AG04450 (cell line): ENCODE measurements at regions of chr5 and their contacts with region 1.

Region 1: DNA sequence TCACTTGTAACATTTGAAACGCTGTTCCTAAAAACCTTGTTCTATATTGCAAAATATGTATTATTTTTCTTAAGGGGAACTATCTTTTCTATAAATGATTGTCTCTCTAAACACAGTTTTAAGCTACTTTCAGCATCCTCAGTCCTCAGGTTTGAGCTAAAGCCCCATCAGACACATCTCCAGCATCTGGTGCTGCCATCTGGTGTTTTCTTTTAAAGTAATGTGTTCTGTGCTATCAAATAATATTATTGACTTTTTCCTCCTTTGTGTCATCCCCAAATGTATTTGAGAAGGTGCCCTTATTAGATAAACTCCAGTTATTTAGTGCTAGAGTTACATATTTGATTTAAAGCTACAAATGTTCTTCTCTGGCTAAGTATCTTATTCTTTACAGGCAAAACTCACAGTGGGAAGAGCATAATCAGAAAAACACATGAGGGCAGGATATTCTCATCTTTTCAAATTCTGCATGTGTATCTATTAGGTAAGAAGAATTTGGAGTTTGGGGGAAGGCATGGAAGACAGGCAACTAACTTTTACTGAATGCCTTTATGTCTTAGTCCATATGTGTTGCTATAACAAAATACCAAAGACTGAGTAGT is 27.5 kb downstream of the ZNF474 start:
- DNase-seq: no peak
- H3K4me3 ChIP-seq: no peak overlapping the region
- H3K27ac ChIP-seq: no peak overlapping the region
- H3K27me3 ChIP-seq: no peaks in the 10 kb centered on the region
- CTCF ChIP-seq: peak; percentile 57

Region 2: GRCh38 chr5:121962347-121962670 is 194.5 kb before region 1 on chr5:
- CTCF ChIA-PET with region 1: interaction called, 50 read pairs
- POLR2A ChIA-PET with region 1: no interaction called
- DNase-seq: no peak
- H3K4me3 ChIP-seq: peak overlapping the region; percentile 93
- H3K27ac ChIP-seq: peak overlapping the region; percentile 76
- H3K27me3 ChIP-seq: no peaks in the 10 kb centered on the region
- CTCF ChIP-seq: no peak

Region 3: GRCh38 chr5:122091936-122092600 is 64.8 kb before region 1 on chr5:
- CTCF ChIA-PET with region 1: interaction called, 30 read pairs
- POLR2A ChIA-PET with region 1: interaction called, 3 read pairs
- DNase-seq: no peak
- H3K4me3 ChIP-seq: no peak overlapping the region
- H3K27ac ChIP-seq: no peak overlapping the region
- H3K27me3 ChIP-seq: no peaks in the 10 kb centered on the region
- CTCF ChIP-seq: peak; percentile 56

Region 4: GRCh38 chr5:122126177-122126755 is 30.6 kb before region 1 on chr5:
- CTCF ChIA-PET with region 1: interaction called, 37 read pairs
- POLR2A ChIA-PET with region 1: interaction called, 4 read pairs
- DNase-seq: peak; percentile 59
- H3K4me3 ChIP-seq: peak overlapping the region; percentile 51; the same call in 1 of the 2 replicates
- H3K27ac ChIP-seq: no peak overlapping the region
- H3K27me3 ChIP-seq: no peaks in the 10 kb centered on the region
- CTCF ChIP-seq: no peak

Region 5: DNA sequence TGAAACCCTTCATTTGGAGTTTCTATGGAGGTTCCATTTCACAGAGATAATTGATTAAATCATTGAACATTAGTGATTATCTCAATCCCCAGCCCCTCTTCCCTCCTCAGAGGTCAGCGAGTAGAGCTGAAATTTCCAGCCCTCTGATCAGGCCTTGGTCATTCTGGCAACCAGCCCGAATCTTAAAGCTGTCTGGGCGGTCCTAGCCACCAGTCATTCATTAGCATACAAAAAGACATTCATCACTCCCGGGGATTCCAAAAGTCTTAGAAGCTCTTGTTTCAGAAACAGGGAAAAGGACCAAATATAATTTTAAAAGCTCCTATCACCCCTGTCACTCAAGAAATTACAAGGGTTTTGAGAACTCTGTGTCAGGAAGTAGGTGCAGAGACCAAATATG is 13.8 kb after region 1 on chr5:
- CTCF ChIA-PET with region 1: interaction called, 17 read pairs
- POLR2A ChIA-PET with region 1: no interaction called
- DNase-seq: no peak
- H3K4me3 ChIP-seq: no peak overlapping the region
- H3K27ac ChIP-seq: no peak overlapping the region
- H3K27me3 ChIP-seq: no peaks in the 10 kb centered on the region
- CTCF ChIP-seq: no peak

Region 6: GRCh38 chr5:122182491-122182921 is 25.7 kb after region 1 on chr5:
- CTCF ChIA-PET with region 1: interaction called, 13 read pairs
- POLR2A ChIA-PET with region 1: no interaction called
- DNase-seq: peak; percentile 52
- H3K4me3 ChIP-seq: no peak overlapping the region
- H3K27ac ChIP-seq: peak overlapping the region; percentile 50
- H3K27me3 ChIP-seq: no peaks in the 10 kb centered on the region
- CTCF ChIP-seq: no peak